Activated T-helper 1 cell treated with anti-CD3 and anti-CD28 coated beads, Interleukin-12 subunit alpha, Interleukin-12 subunit beta, Interleukin-2, Interleukin-4 antibody, amounts not matched to agents 30 ng/mL and 10 ng/mL and 1 ng/mL, durations not matched to agents 14 hours and 24 hours and 36 hours (primary cell): ENCODE measurements at regions of chr1 and their contacts with region 1.

Region 1: GRCh38 chr1:239951511-239952140 is 140.1 kb upstream of the FMN2 start:
- DNase-seq: no peak
- H3K4me3 Mint-ChIP-seq: no peak overlapping the region
- H3K27ac Mint-ChIP-seq: no peak overlapping the region
- H3K4me1 Mint-ChIP-seq: no peaks in the 10 kb centered on the region
- H3K27me3 Mint-ChIP-seq: peaks cover under 1% of the 10 kb centered on the region

Region 2: DNA sequence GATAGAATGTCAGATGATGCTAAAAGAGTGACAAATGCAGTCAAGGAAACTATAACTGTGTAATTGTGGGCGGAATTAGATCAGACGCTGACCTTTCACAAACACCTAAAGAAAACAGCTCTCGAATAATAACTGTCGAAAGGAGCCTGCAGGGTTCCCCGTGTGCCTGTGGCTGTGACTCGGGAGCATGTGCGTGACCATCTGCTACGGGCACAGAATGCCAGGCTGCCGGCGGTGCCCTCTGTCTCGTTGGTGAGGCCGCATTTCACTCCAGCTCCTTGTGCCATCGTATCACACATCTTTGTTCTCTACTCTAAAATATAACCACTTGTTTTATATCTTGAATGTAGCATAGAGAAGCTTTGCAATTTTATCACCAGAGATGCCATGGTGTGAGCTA is 127.8 kb before region 1 on chr1:
- intact Hi-C with region 1: no loop called
- DNase-seq: no peak
- H3K4me3 Mint-ChIP-seq: no peak overlapping the region
- H3K27ac Mint-ChIP-seq: no peak overlapping the region
- H3K4me1 Mint-ChIP-seq: peaks cover 4% of the 10 kb centered on the region
- H3K27me3 Mint-ChIP-seq: no peaks in the 10 kb centered on the region

Region 3: DNA sequence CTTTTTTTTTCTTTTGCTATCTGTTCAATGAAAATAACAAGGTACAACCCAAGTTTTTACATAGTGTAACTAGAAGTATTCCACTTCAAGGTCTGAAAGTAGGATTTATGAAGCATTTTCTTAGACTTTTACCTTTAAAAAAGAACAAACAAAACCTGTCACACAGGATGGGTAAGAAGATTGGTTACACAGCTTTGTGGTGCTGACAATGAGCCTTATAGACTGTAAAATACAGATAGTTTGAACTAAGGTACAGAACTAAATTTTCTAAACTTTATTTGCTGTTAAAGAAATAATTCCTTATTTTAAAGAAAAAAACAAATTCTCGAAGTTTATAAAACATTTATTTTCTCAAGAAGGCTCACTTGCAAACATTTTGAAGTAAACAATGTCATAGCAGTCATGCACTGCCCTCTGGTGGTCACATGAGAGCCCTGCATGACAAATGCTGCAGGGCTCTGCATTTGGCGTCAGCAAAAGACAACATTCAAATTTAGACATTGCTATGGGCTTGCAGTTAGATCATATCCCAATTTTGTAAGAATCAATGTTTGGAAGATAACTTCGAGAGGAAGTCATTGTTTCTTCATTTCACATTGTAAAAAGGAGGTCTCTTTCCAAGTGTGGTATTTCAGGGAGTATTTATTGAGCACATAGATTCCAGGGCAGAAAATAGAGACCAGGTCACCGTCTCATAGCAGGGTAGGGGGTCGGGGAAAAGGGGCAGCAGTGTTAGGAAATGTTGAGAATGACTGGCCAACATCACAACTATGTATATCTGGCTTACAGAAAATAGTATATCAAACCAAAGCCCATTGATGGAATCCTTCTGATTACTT is 24.7 kb after region 1 on chr1:
- intact Hi-C with region 1: loop called (anchors 1 kb)
- DNase-seq: peak; percentile 9
- H3K4me3 Mint-ChIP-seq: no peak overlapping the region
- H3K27ac Mint-ChIP-seq: no peak overlapping the region
- H3K4me1 Mint-ChIP-seq: no peaks in the 10 kb centered on the region
- H3K27me3 Mint-ChIP-seq: no peaks in the 10 kb centered on the region

Region 4: DNA sequence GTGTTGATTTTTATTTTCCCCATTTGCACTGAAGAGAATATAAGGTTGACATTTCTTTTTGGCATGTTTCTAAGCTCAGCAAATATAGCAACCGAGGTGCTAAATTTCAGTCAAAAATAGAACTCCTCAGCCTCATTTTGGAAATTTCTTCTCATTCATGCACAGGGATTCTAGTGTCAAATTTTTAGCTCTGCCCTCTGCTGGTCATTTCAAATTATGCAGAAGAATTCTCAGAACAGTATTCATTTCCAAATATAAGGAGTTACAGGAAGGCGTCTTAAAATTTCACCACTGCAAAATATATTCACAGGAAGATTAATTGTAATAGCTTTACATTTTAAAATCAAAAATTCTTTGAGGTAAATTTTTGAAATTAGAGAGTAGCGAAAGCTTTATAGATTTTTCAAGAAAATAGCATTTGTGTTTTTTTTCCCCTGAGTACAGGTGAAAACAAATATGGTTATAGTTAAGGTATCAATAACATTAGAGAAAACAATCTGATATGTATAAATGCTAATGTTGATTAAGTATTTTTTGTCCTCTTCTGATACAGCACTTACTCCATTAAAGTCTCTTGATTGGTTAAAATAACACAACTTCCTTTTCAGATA is 198.0 kb after region 1 on chr1:
- intact Hi-C with region 1: loop called (anchors 1 kb)
- DNase-seq: no peak
- H3K4me3 Mint-ChIP-seq: no peak overlapping the region
- H3K27ac Mint-ChIP-seq: no peak overlapping the region
- H3K4me1 Mint-ChIP-seq: no peaks in the 10 kb centered on the region
- H3K27me3 Mint-ChIP-seq: peaks cover 2% of the 10 kb centered on the region